Panc1 (cell line): ENCODE measurements at regions of chr3 and their contacts with region 1.

Region 1: DNA sequence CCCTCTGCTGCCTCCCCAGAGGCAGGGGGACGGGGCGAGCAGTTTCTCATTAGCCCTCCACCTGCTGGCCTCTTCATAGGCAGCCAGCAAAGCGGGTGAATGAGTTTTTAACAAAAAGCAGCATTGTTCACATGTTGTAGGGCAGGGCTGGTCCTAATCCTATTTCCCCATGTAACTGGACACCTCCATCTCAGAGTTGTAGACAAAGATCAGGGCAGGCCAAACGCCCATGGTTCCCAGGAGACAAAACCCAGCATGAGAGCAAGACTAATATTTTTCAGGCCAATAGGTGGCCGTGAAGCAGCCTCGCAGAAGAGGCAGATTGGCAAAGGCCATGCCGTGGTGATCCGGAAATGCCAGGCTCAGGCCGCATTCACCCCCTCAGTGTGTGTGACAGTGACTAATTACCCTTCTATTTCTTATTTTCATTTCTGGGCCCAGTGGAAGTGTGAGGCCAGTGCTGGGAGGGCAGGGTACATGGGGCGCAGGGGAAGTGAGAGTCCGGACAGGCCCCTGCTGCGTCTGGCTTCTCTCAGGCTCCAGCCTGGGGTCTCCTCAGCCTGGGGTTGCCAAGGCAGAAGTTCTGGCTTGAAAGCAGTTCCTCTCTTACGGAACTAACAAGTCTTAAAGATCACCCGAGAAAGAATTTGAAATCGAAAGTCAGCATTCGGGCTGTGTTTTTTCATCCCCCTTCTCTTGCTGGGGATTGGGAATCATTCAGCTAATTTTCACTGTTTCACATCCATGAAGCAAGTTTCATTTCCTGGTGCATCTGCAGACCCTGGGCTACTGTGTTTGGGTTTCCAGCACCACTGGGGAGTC is 64.8 kb downstream of the BOC start:
- DNase-seq: no peak
- ATAC-seq: peak; percentile 40; the same call in 1 of the 2 replicates
- H3K4me3 ChIP-seq: peak overlapping the region in 1 of 2 experiments; percentile 25; a peak in 2 of 4 replicates
- H3K27ac ChIP-seq: no peak overlapping the region
- H3K4me1 ChIP-seq: no peaks in the 10 kb centered on the region
- H3K27me3 ChIP-seq: peaks cover 2% of the 10 kb centered on the region; the same call in 1 of the 2 replicates
- CTCF ChIP-seq: no peak

Region 2: DNA sequence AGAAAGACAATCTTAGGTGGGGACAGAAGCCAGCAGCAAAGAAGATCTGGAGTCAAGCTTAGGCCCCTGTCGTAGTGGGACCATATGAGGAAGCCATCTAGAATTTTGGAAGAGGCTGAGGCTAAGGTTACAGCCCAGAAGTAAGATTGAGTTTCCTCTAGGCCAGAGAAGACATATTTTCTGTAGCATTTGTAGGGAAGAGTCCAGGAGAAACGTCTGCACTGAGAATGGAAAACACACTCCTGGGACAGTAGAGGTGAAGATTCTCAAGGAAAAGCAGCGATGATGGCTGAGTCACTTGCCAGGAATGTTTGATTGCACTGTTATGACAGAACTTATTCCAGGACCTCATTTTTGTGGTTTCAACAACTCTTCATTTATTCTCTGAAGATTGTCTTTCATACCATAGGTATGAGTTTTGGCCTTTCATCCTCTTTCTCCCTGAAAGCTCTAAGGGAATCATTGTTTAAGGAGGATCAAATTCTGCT is 178.1 kb before region 1 on chr3:
- CTCF ChIA-PET with region 1: no interaction called
- POLR2A ChIA-PET with region 1: no interaction called
- in situ Hi-C with region 1: no loop called
- intact Hi-C with region 1: no loop called
- DNase-seq: no peak
- ATAC-seq: no peak
- H3K4me3 ChIP-seq: no peak overlapping the region
- H3K27ac ChIP-seq: no peak overlapping the region
- H3K4me1 ChIP-seq: no peaks in the 10 kb centered on the region
- H3K27me3 ChIP-seq: peaks cover 2% of the 10 kb centered on the region; the same call in 1 of the 2 replicates
- CTCF ChIP-seq: no peak

Region 3: DNA sequence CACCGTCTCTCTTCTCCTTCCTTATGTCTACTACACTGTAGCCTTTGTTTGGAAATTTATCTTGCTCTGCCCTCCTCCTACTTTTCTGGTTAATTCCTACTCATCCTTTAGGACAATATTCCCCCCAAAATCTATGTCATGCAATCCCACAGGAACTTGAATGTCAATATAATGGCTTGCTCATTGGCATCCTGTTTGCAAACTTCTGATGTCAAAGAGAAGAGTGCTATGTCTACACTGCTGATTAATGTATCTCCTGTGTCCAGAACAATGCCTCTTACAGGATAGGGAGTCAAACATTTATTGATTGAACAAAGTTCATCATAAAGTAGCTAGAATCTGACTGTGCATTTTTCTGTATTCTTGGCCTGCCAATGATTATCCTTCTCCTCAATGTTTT is 279.0 kb after region 1 on chr3:
- CTCF ChIA-PET with region 1: no interaction called
- POLR2A ChIA-PET with region 1: interaction called, 10 read pairs
- in situ Hi-C with region 1: no loop called
- intact Hi-C with region 1: no loop called
- DNase-seq: no peak
- ATAC-seq: no peak
- H3K4me3 ChIP-seq: no peak overlapping the region
- H3K27ac ChIP-seq: no peak overlapping the region
- H3K4me1 ChIP-seq: no peaks in the 10 kb centered on the region
- H3K27me3 ChIP-seq: peaks cover 3% of the 10 kb centered on the region; the same call in 1 of the 2 replicates
- CTCF ChIP-seq: no peak